ENCODE measurements at regions of chr17 and their contacts with region 1.

Region 1: GRCh38 chr17:38557836-38558727 is 47.7 kb downstream of the SRCIN1 start:
- DNase-seq: peak; percentile 96
- H3K4me3 ChIP-seq: peak overlapping the region in 3 of 4 donors; percentile 26 to 43 (median 42)
- H3K27ac ChIP-seq: peak overlapping the region in 3 of 4 donors; percentile 1 to 33 (median 1)
- H3K4me1 ChIP-seq: peaks cover 0 to 31% (median 24%) of the 10 kb centered on the region in 4 donors
- H3K27me3 ChIP-seq: peaks cover 17 to 36% (median 30%) of the 10 kb centered on the region in 3 donors
- CTCF ChIP-seq: peak; percentile 87 to 90 (median 88)
- EP300 ChIP-seq: no peak
- POLR2A ChIP-seq: no peak

Region 2: GRCh38 chr17:38584350-38584925 is 26.4 kb after region 1 on chr17:
- intact Hi-C with region 1: loop called (anchors 1 kb)
- DNase-seq: peak; percentile 78
- H3K4me3 ChIP-seq: no peak overlapping the region
- H3K27ac ChIP-seq: peak overlapping the region in 1 of 4 donors; percentile 5
- H3K4me1 ChIP-seq: peaks cover 0 to 18% (median 12%) of the 10 kb centered on the region in 4 donors
- H3K27me3 ChIP-seq: peaks cover 0 to 18% (median 17%) of the 10 kb centered on the region in 3 donors
- CTCF ChIP-seq: peak; percentile 79 to 91 (median 82)
- EP300 ChIP-seq: no peak
- POLR2A ChIP-seq: no peak